Activated CD8-positive, alpha-beta T cell treated with anti-CD3 and anti-CD28 coated beads, Interleukin-2, amount 10 ng/mL, durations not matched to agents 7 days and 5 days (primary cell): ENCODE measurements at regions of chr18 and their contacts with region 1.

Region 1: GRCh38 chr18:47204908-47205522 is 28.9 kb upstream of the IER3IP1 start:
- DNase-seq: peak; percentile 49
- ATAC-seq: no peak
- H3K4me3 Mint-ChIP-seq: no peak overlapping the region
- H3K27ac Mint-ChIP-seq: no peak overlapping the region
- H3K4me1 Mint-ChIP-seq: no peaks in the 10 kb centered on the region
- H3K27me3 Mint-ChIP-seq: peaks cover 29% of the 10 kb centered on the region

Region 2: GRCh38 chr18:47050468-47050867 is 154.5 kb before region 1 on chr18:
- CTCF ChIA-PET with region 1: interaction called, 13 read pairs
- POLR2A ChIA-PET with region 1: no interaction called
- DNase-seq: peak; percentile 34
- ATAC-seq: no peak
- H3K4me3 Mint-ChIP-seq: no peak overlapping the region
- H3K27ac Mint-ChIP-seq: no peak overlapping the region
- H3K4me1 Mint-ChIP-seq: no peaks in the 10 kb centered on the region
- H3K27me3 Mint-ChIP-seq: no peaks in the 10 kb centered on the region

Region 3: GRCh38 chr18:47100214-47100831 is 104.7 kb before region 1 on chr18:
- CTCF ChIA-PET with region 1: interaction called, 34 read pairs
- POLR2A ChIA-PET with region 1: no interaction called
- DNase-seq: peak; percentile 68
- ATAC-seq: no peak
- H3K4me3 Mint-ChIP-seq: no peak overlapping the region
- H3K27ac Mint-ChIP-seq: no peak overlapping the region
- H3K4me1 Mint-ChIP-seq: no peaks in the 10 kb centered on the region
- H3K27me3 Mint-ChIP-seq: no peaks in the 10 kb centered on the region

Region 4: DNA sequence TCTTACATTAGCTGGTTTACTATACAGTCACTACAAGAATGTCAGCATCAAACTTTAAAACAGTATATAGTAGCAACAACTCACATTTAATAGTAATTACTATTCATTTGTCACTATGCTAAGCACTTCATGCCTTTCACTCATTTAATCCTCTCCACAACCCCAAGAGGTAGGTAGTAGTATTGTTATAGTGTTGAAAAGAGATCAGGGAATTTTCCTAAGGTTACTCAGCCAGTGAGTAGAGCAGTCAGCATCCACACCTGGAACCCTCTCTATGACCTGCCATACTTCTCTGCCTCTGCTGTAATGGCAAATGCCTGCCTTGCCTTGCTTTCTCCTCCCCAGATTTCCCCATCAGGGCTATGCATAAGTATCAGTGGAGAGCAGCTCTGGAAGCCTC is 21.6 kb after region 1 on chr18:
- CTCF ChIA-PET with region 1: no interaction called
- POLR2A ChIA-PET with region 1: no interaction called
- DNase-seq: no peak
- ATAC-seq: no peak
- H3K4me3 Mint-ChIP-seq: no peak overlapping the region
- H3K27ac Mint-ChIP-seq: no peak overlapping the region
- H3K4me1 Mint-ChIP-seq: no peaks in the 10 kb centered on the region
- H3K27me3 Mint-ChIP-seq: peaks cover 34% of the 10 kb centered on the region